ENCODE measurements at regions of chr4 and their contacts with region 1.

Region 1: DNA sequence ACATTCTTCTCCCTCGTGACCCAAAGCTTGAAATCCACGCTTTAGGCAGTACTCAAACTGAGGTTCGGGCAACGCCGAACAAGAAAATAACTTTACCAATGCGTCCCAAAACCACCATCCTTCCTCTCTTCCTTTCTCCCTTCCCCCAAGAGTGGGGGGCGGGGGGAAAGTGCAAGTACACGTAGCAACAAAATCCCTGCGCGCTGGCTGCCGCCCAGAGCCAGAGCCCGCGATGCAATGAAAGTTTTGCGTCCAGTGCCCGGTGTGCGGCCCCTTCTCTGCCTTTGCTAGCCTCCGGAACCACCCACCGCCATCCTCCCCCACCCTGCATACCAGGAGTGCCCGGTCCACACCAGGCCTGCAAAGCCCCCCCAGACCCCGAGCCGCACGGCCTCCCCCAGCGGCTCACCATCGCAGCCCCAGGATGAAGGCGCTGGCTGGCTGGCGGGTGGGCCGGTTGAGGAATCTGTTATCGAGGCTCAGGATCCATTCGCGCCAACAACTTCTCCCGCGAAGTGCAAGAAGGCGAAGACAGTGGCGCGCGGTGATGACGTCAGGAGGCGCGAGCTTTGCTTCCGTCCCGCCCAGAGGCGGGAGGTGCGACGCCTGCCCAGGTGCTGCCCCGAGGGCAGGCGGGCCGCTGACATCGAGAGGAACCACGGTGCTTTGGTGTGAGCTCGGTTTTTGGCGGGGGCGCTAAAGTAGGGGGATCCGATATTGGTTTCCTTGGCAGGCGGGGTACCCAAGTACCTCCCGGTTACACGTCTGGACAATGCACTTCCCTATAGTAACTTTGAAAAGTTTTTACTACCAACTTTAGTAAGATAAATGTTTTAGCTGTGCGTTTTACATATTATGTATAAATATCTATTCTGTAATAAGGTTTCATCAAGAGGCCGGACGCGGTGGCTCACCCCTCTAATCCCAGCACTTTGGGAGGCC is at the start of gene RFC1:
- DNase-seq: peak; percentile 86 to 96 (median 95)
- ATAC-seq: peak; percentile 97
- H3K4me3 ChIP-seq: peak within 1 kb of the TSS; percentile 92 to 99
- H3K4me3 Mint-ChIP-seq: peak within 1 kb of the TSS; percentile 93
- H3K27ac ChIP-seq: peak within 1 kb of the TSS; percentile 81
- H3K27ac Mint-ChIP-seq: peak within 1 kb of the TSS; percentile 94
- H3K4me1 ChIP-seq: peaks cover 18% of the 10 kb centered on the region
- H3K4me1 Mint-ChIP-seq: peaks cover 35% of the 10 kb centered on the region
- H3K27me3 ChIP-seq: no peaks in the 10 kb centered on the region
- H3K27me3 Mint-ChIP-seq: no peaks in the 10 kb centered on the region
- CTCF ChIP-seq: no peak
- total RNA-seq, gene RFC1: 82.2 to 89.8 TPM

Region 2: GRCh38 chr4:39044364-39044955 is 321.6 kb before region 1 on chr4:
- CTCF ChIA-PET with region 1: no interaction called
- POLR2A ChIA-PET with region 1: no interaction called
- intact Hi-C with region 1: loop called in 1 of 2 experiments (anchors 10 kb)
- DNase-seq: peak; percentile 85 to 99 (median 93)
- ATAC-seq: peak; percentile 83
- H3K4me3 ChIP-seq: peak overlapping the region; percentile 60 to 66
- H3K4me3 Mint-ChIP-seq: peak overlapping the region; percentile 92
- H3K27ac ChIP-seq: peak overlapping the region; percentile 59 to 89
- H3K27ac Mint-ChIP-seq: peak overlapping the region; percentile 96
- H3K4me1 ChIP-seq: peaks cover 21% of the 10 kb centered on the region
- H3K4me1 Mint-ChIP-seq: peaks cover 53% of the 10 kb centered on the region
- H3K27me3 ChIP-seq: no peaks in the 10 kb centered on the region
- H3K27me3 Mint-ChIP-seq: no peaks in the 10 kb centered on the region
- CTCF ChIP-seq: no peak

Region 3: GRCh38 chr4:39353478-39354253 is 12.4 kb before region 1 on chr4:
- CTCF ChIA-PET with region 1: interaction called, 4 read pairs
- POLR2A ChIA-PET with region 1: interaction called, 12 read pairs
- intact Hi-C with region 1: loop called (anchors 1 kb)
- DNase-seq: peak in 2 of 9 experiments; percentile 58 to 77
- ATAC-seq: peak; percentile 83
- H3K4me3 ChIP-seq: peak overlapping the region; percentile 40 to 44
- H3K4me3 Mint-ChIP-seq: peak overlapping the region; percentile 86
- H3K27ac ChIP-seq: peak overlapping the region; percentile 71 to 89
- H3K27ac Mint-ChIP-seq: peak overlapping the region; percentile 98
- H3K4me1 ChIP-seq: peaks cover 21% of the 10 kb centered on the region
- H3K4me1 Mint-ChIP-seq: peaks cover 63% of the 10 kb centered on the region
- H3K27me3 ChIP-seq: no peaks in the 10 kb centered on the region
- H3K27me3 Mint-ChIP-seq: no peaks in the 10 kb centered on the region
- CTCF ChIP-seq: no peak

Region 4: GRCh38 chr4:39527273-39528060 is 161.4 kb after region 1 on chr4 and contains the start of gene UGDH:
- CTCF ChIA-PET with region 1: no interaction called
- POLR2A ChIA-PET with region 1: interaction called, 7 read pairs
- intact Hi-C with region 1: loop called (anchors 5 to 10 kb)
- DNase-seq: peak; percentile 81 to 96 (median 90)
- ATAC-seq: peak; percentile 98
- H3K4me3 ChIP-seq: peak within 1 kb of the TSS; percentile 87 to 89
- H3K4me3 Mint-ChIP-seq: peak within 1 kb of the TSS; percentile 96
- H3K27ac ChIP-seq: peak within 1 kb of the TSS; percentile 68 to 74
- H3K27ac Mint-ChIP-seq: peak within 1 kb of the TSS; percentile 93
- H3K4me1 ChIP-seq: peaks cover 17% of the 10 kb centered on the region
- H3K4me1 Mint-ChIP-seq: peaks cover 24% of the 10 kb centered on the region
- H3K27me3 ChIP-seq: no peaks in the 10 kb centered on the region
- H3K27me3 Mint-ChIP-seq: no peaks in the 10 kb centered on the region
- CTCF ChIP-seq: no peak
- total RNA-seq, gene UGDH: 2.6 to 3.6 TPM

Region 5: DNA sequence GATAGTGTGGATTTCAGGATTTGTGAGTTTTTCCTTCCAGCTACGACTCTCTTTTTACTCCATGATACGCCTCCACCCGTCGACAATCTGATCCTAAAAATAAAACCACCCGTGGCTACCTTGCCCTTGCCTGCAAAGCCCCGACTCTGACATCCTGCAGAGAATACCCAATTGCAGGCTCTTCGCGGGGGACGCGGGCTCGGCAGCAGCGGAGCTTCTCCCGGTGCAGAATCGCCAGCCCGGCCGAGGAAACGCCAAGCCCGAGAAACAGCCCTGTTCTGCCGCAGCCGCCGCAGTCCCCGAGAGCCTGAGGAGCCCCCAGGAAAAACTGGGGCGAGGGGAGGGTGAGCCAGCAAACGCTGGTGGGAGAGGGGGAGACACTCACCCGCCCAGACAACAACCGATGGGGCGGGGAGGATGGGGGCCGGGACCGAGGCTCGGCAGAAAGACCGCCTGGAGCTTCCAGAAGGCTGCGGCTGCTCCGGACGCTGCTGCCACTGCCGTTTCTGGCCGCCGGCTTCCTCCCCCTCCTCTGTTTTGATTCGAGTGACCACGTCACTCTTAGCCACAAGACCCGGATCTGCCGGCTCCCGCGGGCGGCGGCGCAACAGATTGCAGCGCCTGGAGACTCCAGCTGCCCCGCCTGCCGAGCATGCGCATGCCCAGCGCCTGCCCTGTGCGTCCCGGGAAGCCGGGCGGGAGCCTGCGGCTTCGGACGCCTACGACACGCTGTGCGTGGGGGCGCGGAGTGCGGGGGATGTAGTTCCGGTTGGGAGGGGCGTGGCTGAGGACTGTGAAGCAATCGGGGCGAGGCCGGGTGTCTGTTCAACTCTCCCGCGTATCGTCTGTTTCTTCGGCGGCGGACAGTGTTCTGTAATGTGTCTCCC is 272.5 kb after region 1 on chr4 and contains the start of gene SMIM14:
- CTCF ChIA-PET with region 1: no interaction called
- POLR2A ChIA-PET with region 1: no interaction called
- intact Hi-C with region 1: loop called in 1 of 2 experiments (anchors 10 kb)
- DNase-seq: peak; percentile 72 to 95 (median 90)
- ATAC-seq: peak; percentile 83
- H3K4me3 ChIP-seq: peak within 1 kb of the TSS; percentile 62 to 97
- H3K4me3 Mint-ChIP-seq: peak within 1 kb of the TSS; percentile 90
- H3K27ac ChIP-seq: peak within 1 kb of the TSS; percentile 63 to 91
- H3K27ac Mint-ChIP-seq: peak within 1 kb of the TSS; percentile 96
- H3K4me1 ChIP-seq: peaks cover 18% of the 10 kb centered on the region
- H3K4me1 Mint-ChIP-seq: peaks cover 44% of the 10 kb centered on the region
- H3K27me3 ChIP-seq: no peaks in the 10 kb centered on the region
- H3K27me3 Mint-ChIP-seq: no peaks in the 10 kb centered on the region
- CTCF ChIP-seq: no peak
- total RNA-seq, gene SMIM14: 1.4 TPM